Activated CD8-positive, alpha-beta memory T cell treated with anti-CD3 and anti-CD28 coated beads, Interleukin-2, amount 10 ng/mL, durations not matched to agents 7 days and 5 days (primary cell): ENCODE measurements at regions of chr6 and their contacts with region 1.

Region 1: GRCh38 chr6:149834513-149835481 is 29.4 kb downstream of the LRP11 start:
- DNase-seq: peak; percentile 79
- ATAC-seq: peak; percentile 47
- H3K4me3 Mint-ChIP-seq: no peak overlapping the region
- H3K27ac Mint-ChIP-seq: no peak overlapping the region
- H3K4me1 Mint-ChIP-seq: peaks cover 2% of the 10 kb centered on the region
- H3K27me3 Mint-ChIP-seq: peaks cover 13% of the 10 kb centered on the region

Region 2: DNA sequence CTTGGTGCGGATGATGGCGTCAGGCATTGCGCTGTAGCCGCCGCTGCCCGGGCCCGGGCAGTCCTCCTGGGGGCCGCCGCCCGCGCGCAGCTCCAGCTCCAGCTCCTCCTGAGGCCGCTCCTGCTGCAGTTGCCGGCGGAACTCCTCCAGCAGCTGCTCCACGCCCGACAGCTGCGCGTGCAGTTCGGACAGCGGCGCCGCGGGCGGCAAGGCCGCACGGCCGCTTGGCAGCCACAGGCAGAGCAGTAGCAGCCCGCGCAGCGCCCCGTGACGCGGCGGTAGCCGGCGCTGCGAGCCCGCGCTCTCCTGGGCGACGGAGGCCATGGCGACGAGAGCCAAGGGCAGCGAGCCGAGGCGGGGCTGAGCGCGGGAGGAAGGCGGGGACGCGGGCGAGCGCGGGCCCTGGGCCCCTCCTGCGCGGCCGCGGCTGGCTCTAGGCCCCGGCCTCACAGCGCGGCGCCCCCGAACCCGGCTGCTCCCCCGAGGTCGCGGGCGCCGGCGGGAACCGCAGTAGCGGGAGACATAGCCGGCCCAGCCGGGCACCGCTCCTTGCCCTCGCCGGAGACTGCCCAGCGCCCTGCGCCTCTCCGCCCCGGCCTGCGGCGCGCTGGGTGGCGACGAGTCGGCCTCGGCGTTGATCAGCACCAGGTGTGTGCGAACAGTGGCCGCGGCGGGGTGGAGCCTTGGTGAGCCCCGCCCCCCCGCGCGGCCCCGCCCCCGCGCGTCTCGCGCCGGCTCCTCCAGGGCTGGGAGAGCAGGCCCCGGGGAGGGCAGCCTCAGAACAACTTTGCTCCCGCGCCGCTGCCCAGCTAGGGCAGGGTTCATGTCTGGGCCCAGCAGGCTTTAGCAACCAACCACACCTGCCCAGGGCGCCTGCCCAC is 29.1 kb after region 1 on chr6 and contains the start of gene LRP11:
- CTCF ChIA-PET with region 1: interaction called, 13 read pairs
- DNase-seq: peak; percentile 83
- ATAC-seq: peak; percentile 91
- H3K4me3 Mint-ChIP-seq: peak within 1 kb of the TSS; percentile 74
- H3K27ac Mint-ChIP-seq: no peak within 1 kb of the TSS
- H3K4me1 Mint-ChIP-seq: peaks cover 20% of the 10 kb centered on the region
- H3K27me3 Mint-ChIP-seq: peaks cover 31% of the 10 kb centered on the region
- total RNA-seq, gene LRP11: 2.9 to 3.1 TPM

Region 3: GRCh38 chr6:149918151-149918905 is 83.5 kb after region 1 on chr6:
- CTCF ChIA-PET with region 1: no interaction called
- DNase-seq: peak; percentile 30
- ATAC-seq: no peak
- H3K4me3 Mint-ChIP-seq: no peak overlapping the region
- H3K27ac Mint-ChIP-seq: no peak overlapping the region
- H3K4me1 Mint-ChIP-seq: peaks cover 11% of the 10 kb centered on the region
- H3K27me3 Mint-ChIP-seq: peaks cover 48% of the 10 kb centered on the region